Adrenal gland (tissue), 19 donors: ENCODE measurements at regions of chr10 and their contacts with region 1.

Region 1: DNA sequence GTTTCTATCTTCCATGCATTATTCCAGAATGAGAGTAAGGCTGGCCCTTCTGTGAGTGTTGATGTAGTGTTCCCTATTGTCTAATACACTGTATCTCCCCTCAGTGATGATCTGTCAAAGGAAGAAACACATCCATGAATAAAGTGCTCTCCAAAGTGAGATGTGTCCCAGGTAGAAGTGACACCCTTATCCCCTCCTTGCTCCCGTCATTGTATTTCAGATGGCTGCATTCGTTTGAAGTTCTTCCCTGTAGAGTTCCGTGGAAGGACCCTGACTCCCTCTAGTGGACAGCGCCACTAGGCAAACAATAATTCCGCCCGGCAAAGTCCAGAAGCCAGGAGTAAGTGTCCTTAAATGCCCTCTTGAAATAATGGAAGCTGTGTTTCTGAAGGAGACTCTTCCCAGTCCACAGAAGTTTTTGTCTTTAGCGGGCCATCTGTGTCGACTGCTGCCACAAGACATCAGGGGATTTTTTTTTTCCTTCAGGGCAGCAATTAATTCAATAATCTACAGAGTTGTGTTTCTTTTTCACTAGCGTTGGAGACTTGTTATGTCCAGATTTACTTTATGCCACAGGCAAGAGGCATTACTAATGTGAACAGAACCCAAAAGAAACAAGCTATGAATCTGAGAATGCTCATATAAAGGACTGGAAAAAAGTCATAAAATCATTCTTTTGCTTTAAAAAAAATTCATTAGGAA is 64.6 kb downstream of the THNSL1 start:
- DNase-seq: peak; percentile 80 to 97 (median 86)
- H3K4me3 ChIP-seq: no peak overlapping the region
- H3K27ac ChIP-seq: peak overlapping the region in 1 of 5 donors; percentile 2
- H3K4me1 ChIP-seq: peaks cover 0 to 7% of the 10 kb centered on the region in 2 donors
- H3K27me3 ChIP-seq: no peaks in the 10 kb centered on the region
- CTCF ChIP-seq: peak; percentile 84 to 96 (median 90)
- POLR2A ChIP-seq: no peak

Region 2: DNA sequence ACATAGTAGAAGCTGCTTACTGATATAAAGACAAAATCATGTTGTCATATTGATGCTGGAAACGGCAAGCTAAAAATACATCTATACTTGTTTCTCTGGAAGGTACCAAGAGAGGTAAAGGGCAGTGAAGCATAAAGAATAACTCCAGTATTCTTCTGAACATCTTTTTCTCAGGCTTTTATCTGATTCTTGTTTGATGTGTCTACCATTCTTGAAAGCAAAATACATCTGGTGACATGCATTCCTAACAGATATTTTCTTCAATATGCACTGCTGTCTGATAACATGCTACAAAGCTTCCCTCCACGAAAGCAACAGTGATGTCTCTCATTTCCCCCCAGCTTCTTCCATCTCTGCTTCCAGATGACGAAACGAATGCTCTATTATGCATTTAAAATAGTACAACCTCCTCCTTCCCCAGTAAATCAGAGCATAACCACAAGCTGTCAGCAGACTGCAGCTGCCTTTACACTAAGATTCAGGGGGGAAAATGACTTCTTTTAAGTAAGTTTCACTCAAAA is 458.2 kb before region 1 on chr10:
- intact Hi-C with region 1: loop called in 1 of 2 experiments (anchors 10 kb)
- DNase-seq: no peak
- H3K4me3 ChIP-seq: no peak overlapping the region
- H3K27ac ChIP-seq: no peak overlapping the region
- H3K4me1 ChIP-seq: peaks cover 0 to 4% of the 10 kb centered on the region in 2 donors
- H3K27me3 ChIP-seq: no peaks in the 10 kb centered on the region
- CTCF ChIP-seq: no peak
- POLR2A ChIP-seq: no peak

Region 3: DNA sequence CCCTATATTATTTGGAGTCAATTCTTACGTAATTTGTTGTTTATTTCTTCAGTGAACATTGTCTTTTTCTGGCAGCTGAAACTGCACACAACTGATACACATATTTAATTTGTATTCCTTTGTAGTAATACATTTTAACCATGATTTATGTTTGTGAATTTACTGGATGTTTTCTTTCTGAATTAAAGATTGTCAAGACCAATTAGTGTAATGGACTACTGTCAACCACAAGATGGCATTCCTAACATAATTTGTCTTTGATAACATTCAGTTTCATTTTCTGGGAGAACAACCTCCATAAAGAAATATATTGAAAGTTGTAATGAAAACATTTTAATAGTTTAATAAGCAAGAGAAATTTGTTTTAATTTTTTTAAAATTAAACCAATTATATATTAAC is 54.6 kb before region 1 on chr10:
- intact Hi-C with region 1: loop called in 1 of 2 experiments (anchors 5 kb)
- DNase-seq: no peak
- H3K4me3 ChIP-seq: no peak overlapping the region
- H3K27ac ChIP-seq: no peak overlapping the region
- H3K4me1 ChIP-seq: peaks cover 0 to 3% of the 10 kb centered on the region in 2 donors
- H3K27me3 ChIP-seq: no peaks in the 10 kb centered on the region
- CTCF ChIP-seq: peak; percentile 14 to 59 (median 44)
- POLR2A ChIP-seq: no peak